ENCODE measurements at regions of chr22 and their contacts with region 1.

Region 1: GRCh38 chr22:24325105-24325757 is 54.6 kb downstream of the SPECC1L start:
- DNase-seq: peak; percentile 31
- H3K4me3 Mint-ChIP-seq: no peak overlapping the region
- H3K27ac Mint-ChIP-seq: peak overlapping the region; percentile 35
- H3K4me1 Mint-ChIP-seq: peaks cover 38% of the 10 kb centered on the region
- H3K27me3 Mint-ChIP-seq: no peaks in the 10 kb centered on the region

Region 2: DNA sequence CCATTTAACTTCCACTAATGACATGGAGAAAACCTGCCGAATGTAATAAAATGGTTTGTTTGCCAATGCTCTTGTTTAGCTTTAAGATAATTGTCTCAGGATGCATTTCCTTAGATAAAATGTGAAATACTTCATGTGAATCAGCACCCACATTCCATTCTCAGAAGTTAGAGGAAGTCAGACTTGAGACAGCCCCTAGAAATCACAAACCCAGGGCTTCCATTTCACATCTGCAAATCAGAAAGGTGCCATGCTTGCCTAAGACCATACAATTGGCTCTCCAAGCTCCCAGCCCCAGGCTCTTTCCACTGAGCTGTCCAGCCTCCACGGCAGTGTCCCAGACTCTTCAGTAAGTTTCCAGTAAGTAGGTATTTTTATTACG is 66.6 kb after region 1 on chr22:
- CTCF ChIA-PET with region 1: interaction called, 3 read pairs
- intact Hi-C with region 1: loop called (anchors 5 kb)
- DNase-seq: no peak
- H3K4me3 Mint-ChIP-seq: no peak overlapping the region
- H3K27ac Mint-ChIP-seq: no peak overlapping the region
- H3K4me1 Mint-ChIP-seq: peaks cover 12% of the 10 kb centered on the region
- H3K27me3 Mint-ChIP-seq: no peaks in the 10 kb centered on the region

Region 3: DNA sequence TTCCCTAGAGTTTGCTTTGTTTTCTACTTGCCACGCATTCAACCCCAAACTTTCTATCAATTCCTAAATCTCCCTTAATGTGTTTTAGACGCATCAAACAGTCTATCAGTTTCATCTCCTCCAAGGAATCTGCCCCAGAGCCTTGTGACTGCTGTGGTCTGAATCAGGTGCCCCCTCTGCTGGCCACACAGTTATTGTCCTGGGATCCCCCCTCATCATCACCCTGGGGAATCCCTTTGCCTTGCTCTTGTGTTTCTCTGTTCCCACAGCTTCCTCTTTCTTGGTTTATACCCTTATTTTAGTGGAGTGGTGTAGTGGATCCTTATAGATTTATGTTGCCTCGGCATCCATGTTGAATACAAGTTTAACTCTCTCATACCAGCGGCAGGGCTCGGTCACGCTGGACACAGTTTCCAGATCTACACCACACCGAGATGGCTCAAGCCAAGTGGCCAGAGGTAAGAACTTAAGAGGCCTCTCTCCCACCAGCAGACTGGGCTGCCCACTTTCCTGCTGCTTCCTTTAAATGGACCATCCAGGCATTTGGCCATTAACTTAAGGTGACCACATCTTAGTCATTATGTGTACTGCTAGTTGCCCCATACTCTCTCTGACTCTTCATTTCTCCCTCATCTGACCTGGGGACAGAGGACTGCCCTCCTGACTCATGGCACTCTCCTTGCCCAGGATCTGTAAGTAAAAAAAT is 178.1 kb after region 1 on chr22:
- CTCF ChIA-PET with region 1: no interaction called
- intact Hi-C with region 1: loop called (anchors 1 kb)
- DNase-seq: peak; percentile 87
- H3K4me3 Mint-ChIP-seq: no peak overlapping the region
- H3K27ac Mint-ChIP-seq: no peak overlapping the region
- H3K4me1 Mint-ChIP-seq: peaks cover 7% of the 10 kb centered on the region
- H3K27me3 Mint-ChIP-seq: no peaks in the 10 kb centered on the region